Posterior cingulate gyrus (tissue), 11 donors: ENCODE measurements at regions of chr19 and their contacts with region 1.

Region 1: DNA sequence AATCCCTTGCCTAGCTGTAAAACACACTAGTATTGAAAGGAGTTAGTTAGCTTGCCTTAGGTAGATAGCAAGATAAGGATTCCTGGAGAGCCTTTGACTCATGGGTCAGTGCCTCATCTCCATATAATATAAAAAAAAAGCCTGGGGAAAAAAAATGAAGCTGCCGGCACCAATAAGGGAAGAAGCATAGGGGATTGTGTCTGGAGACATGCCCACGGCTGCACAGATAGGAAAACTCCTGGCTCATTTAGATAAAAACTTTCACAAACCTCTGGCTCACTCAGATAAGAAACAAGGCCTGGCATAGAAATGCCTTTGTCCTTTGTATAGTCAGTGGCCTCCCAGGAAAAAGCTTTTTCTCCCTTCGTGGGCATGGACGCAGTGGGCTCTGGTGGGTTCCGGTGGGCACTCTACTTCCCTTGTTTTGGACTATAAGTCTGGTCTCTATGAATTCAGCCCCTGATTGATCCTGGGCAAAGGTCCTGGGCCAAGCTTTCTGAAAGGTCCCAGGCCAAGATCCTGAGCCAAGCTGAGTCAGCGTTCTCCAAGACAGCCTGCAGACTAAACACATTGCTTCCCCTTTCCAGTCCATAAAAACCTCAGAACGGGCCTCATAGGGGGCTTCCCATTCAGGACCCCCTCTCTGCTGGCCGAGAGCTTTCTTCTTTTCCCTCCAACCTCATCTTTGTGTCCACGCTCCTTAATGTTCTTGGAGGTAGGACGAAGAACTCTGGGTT is 4.9 kb upstream of the OR7A17 start:
- DNase-seq: no peak

Region 2: DNA sequence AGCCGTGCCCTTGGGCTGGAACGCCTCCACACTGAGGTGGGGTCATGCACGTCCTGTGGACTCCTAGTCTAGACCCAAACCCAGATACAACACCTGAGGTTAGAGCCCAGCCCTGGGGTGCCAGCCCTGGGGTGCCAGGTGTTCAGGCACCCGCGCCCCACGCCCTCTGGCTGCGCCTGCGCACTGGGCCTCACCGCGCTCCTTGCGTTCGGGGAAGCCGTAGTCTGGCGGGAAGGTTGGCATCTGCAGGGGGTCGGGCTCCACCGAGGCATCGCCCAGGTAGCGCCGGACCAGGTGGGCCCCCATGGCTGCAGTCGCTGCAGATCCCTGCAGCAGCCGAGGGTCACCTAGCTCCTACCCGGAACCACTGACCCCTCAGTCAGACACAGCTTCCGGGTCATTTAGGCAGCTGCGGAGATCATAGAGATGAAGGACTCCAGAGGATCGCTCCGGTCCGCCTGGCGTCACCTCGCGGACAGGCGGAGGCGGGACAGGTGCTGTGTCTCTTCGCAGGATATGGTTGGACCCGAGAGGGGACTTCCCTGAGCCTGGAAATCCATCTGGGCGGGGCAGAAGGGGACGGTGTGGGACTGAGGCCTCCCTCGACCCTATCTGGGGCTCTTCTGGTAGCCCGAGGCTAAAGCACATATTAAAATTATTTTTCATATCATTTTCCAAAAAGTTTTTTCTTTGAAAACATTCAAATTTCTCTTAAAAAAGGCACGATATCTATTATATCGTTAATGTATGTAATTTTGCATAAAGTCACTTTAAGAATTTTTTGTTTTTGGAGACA is 318.9 kb before region 1 on chr19 and contains the start of gene NDUFB7:
- intact Hi-C with region 1: loop called (anchors 2 kb)
- DNase-seq: peak; percentile 91 to 99 (median 93)

Region 3: DNA sequence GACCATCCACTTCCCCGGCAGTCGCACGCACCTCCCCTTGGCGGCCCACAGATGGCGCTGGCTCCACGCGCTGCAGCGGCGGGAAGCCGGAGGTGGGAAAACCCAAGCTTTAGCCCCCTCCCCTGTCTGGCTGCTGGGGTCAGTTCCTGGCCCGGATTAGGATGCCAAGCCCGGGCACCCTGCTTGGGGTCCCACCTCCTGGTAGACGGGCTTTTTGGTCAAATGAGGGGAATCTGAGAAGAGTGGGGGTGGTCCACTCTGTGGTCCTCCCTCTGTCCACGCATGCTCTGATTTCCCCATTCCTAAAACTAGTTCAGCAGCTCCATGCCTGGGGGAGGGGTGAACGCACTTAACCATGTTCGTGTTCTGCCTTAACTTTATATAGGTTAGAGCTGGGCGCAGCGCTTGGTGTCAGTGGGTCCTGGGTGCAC is 104.4 kb before region 1 on chr19:
- intact Hi-C with region 1: loop called (anchors 10 kb)
- DNase-seq: peak in 2 of 10 donors; percentile 35 to 84

Region 4: DNA sequence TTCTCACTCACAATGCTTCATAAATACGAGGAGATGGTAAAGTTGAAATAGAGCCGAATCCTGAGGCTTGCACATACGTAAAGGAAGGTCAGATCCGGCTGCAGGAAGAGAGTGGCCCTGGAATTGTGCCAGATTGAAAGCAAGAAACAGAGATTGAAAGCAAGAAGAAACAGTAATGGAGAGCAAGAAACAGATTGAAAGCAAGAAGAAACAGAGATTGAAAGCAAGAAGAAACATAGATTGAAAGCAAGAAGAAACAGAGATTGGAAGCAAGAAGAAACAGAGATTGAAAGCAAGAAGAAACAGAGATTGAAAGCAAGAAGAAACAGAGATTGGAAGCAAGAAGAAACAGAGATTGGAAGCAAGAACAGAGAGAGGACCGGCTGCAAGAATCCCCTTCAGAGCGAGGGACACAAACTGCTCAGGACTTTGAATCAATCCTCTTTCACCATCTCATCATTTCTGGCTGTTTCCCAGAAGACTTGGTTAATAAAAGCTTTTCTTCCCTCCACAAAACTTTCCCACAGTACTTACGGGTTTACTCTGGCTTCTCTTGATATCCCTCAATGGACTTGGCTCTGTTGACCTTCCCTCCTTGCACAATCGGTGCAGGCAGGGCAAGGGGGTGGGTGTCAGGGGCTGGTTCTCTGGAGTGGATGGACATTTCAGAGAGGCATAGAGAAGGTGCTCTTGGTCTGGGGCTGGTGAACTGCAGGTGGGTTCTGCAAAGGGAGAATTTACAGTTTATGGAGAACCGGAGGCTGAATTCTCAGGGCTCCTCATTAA is 81.3 kb before region 1 on chr19:
- intact Hi-C with region 1: no loop called
- DNase-seq: no peak